Gastrocnemius medialis (tissue), 4 donors: ENCODE measurements at regions of chr9 and their contacts with region 1.

Region 1: DNA sequence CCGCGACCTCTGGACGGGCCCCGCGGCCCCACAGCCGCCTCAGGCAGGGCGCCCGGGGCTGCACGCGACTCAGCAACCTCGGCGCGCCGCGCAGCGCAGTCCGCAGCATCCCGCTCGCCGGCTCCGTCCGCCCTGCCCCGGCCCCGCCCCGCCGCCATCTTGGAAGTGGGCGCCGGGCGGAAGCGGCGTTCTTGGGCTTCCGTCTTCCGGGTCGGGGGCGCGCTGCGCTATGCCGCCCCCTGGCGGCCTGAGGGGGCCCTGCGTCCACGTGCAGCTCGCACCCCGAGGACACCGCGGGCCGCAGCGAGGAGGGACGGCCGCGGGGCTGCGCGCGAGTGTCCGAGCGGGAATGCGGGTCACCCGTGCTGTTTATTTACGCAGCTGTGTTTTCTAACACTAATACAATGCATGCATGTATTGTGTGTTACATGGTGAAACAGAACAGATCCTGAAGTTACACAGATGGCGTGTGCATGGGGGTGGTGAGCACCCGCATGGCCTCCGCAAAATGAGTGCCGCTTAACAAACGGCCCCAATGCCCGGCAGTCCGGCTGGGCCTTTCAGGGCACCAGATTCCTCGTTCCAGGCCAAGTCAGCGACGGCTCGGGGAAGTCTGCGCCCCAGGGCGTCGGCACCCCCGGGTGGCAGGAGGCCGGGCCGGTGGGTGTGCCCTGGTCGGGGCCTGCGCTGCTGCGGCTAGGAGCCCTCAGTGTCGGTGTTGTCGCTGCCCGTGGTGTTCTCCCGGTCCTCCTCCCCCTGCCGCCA is at the start of gene DNLZ:
- DNase-seq: peak; percentile 65 to 72
- ATAC-seq: peak; percentile 88
- H3K4me3 ChIP-seq: peak within 1 kb of the TSS; percentile 68 to 86 (median 78)
- H3K27ac ChIP-seq: peak within 1 kb of the TSS; percentile 81 to 96 (median 94)
- H3K4me1 ChIP-seq: peaks cover 7 to 9% of the 10 kb centered on the region in 2 donors
- H3K27me3 ChIP-seq: no peaks in the 10 kb centered on the region
- CTCF ChIP-seq: peak; percentile 88 to 100 (median 99)
- POLR2A ChIP-seq: peak; percentile 62 to 75
- total RNA-seq, gene DNLZ: 37.9 to 65.1 (median 54.3) TPM

Region 2: GRCh38 chr9:136245219-136246150 is 118.3 kb before region 1 on chr9 and contains the start of gene QSOX2:
- in situ Hi-C with region 1: no loop called
- intact Hi-C with region 1: loop called (anchors 1 kb)
- DNase-seq: peak; percentile 73 to 77
- ATAC-seq: peak; percentile 90 to 91
- H3K4me3 ChIP-seq: peak within 1 kb of the TSS; percentile 67 to 99 (median 83)
- H3K27ac ChIP-seq: peak within 1 kb of the TSS; percentile 49 to 61 (median 58)
- H3K4me1 ChIP-seq: peaks cover 14 to 19% of the 10 kb centered on the region in 2 donors
- H3K27me3 ChIP-seq: no peaks in the 10 kb centered on the region
- CTCF ChIP-seq: no peak
- POLR2A ChIP-seq: no peak
- total RNA-seq, gene QSOX2: 3.3 to 5.8 (median 5.2) TPM

Region 3: DNA sequence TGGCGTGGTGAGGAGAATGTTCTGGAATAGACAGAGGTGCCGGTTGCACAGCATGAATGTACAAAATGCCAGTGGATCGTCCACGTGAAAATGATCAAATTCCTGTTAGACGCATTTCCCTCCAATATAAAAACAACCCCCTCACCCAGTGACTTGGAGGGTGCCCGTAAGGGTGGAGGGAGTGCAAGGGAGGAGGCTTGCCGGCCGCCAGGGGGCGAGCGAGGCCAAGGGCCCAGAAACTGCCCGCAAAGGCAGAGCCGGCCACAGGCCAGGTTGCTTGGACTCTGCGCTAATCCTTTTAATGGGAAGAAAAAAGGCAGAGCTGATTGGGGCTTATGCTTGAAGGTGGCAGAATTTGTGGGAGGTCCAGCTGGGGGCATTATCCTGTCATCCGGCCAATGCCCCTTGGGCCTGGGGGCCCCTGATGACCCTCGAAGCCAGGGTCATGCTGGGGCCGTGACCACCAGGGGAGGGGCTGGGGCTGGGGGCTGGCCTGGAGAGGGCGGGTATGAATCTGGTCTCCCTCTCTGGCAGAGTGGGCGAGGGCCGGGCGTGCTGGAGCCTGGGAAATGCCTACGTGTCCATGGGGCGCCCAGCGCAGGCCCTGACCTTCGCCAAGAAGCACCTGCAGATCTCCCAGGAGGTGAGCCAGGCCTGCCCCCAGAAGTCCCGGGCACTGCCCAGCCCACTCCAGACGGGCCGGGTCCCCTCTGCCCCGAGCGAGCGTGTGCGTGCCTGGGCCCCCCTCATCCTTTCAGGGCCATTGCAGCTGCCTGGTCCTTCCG is 24.4 kb before region 1 on chr9:
- in situ Hi-C with region 1: no loop called
- intact Hi-C with region 1: loop called (anchors 1 kb)
- DNase-seq: peak in 1 of 2 donors; percentile 37
- ATAC-seq: peak; percentile 66 to 80
- H3K4me3 ChIP-seq: no peak overlapping the region
- H3K27ac ChIP-seq: no peak overlapping the region
- H3K4me1 ChIP-seq: peaks cover 0 to 5% of the 10 kb centered on the region in 2 donors
- H3K27me3 ChIP-seq: peaks cover 2 to 20% (median 13%) of the 10 kb centered on the region in 3 donors
- CTCF ChIP-seq: peak; percentile 43 to 89 (median 77)
- POLR2A ChIP-seq: no peak

Region 4: DNA sequence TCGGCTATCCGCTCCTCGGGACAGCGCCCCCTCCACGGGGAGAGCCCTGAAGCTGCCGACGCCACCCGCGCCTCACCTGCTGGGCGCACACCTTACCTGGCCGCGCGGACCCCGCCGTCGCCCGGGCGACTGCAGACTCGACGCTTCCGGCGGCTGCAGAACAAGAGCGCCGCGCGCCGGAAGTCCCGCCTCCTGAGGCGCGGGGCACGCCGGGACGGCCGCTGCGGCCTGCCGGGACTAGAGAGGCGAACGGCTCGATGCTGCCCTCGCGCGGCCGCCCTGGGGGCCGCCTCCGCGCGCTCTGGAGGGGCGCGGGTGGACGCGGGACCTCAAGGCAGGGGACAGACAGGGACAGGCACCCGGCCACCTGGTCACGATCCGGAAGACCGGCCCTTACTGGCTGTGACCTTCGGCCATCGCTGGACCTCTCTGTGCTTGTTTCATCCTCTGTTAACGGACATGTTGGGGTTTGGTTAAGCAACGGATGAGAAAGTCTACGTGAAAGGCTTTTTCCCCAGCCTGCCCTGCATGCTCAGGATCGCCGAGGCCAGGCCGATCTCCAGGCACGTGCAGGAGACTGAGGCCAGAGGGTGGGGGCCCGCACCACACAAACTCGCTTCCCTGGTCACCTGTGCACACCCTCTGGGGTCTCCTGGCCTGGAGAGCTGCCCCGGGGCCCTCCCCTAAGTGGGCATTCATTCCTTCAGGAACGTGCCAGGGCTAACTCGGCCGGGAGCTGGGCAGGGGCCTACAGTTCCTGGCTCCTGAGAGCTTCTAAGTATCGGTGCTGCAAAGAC is 36.4 kb after region 1 on chr9 and contains the start of gene SNAPC4:
- in situ Hi-C with region 1: no loop called
- intact Hi-C with region 1: loop called (anchors 1 kb)
- DNase-seq: peak; percentile 52 to 75
- ATAC-seq: peak; percentile 90 to 93
- H3K4me3 ChIP-seq: peak within 1 kb of the TSS; percentile 75 to 96 (median 94)
- H3K27ac ChIP-seq: peak within 1 kb of the TSS; percentile 54 to 78 (median 73)
- H3K4me1 ChIP-seq: peaks cover 14 to 18% of the 10 kb centered on the region in 2 donors
- H3K27me3 ChIP-seq: no peaks in the 10 kb centered on the region
- CTCF ChIP-seq: peak; percentile 84 to 98 (median 91)
- POLR2A ChIP-seq: peak; percentile 60 to 64
- total RNA-seq, gene SNAPC4: 2.3 to 6.0 (median 3.9) TPM

Region 5: DNA sequence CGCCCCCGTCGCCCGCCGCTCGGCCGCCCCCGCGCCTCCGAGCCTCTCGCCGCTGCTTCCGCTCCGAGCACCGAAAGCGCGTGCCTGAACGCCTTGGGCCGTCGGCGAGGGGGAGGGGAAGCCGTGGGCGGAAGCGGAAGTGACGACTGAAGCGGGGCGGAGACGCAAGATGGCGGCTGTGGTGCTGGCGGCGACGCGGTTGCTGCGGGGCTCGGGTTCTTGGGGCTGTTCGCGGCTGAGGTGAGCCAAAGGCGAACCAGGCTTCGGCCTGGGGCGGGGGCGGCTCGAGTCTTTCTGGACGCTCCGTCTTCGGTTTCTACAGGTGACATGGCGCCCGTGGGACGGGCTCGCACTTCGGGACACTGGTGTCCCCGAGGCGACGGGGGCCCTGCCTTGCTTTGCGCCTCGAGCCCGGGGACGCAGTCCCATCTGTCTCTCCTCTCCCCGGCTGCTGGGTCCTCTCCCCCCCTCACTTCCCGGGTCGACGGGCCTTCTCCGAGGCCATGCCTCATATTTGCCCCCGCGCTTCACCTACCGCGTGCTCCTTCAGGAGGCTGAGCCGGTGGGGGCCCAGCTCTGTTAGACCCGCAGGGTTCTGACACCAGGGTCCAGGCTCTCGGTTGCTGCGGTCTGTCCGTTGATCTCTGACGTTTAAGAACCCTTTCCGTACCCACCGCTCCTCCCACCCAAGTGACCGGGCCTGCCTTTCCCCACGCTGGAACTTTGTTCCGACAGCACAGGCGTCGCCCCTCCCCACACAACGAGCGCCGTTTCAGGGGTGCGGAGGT is 46.9 kb after region 1 on chr9 and contains the starts of genes ENTR1 and PMPCA:
- in situ Hi-C with region 1: no loop called
- intact Hi-C with region 1: no loop called
- DNase-seq: peak; percentile 87
- ATAC-seq: peak; percentile 94 to 96
- H3K4me3 ChIP-seq: peak within 1 kb of the TSS; percentile 76 to 97 (median 82)
- H3K27ac ChIP-seq: peak within 1 kb of the TSS; percentile 81 to 93 (median 90)
- H3K4me1 ChIP-seq: peaks cover 16 to 25% of the 10 kb centered on the region in 2 donors
- H3K27me3 ChIP-seq: no peaks in the 10 kb centered on the region
- CTCF ChIP-seq: no peak
- POLR2A ChIP-seq: peak; percentile 83 to 94
- total RNA-seq, gene ENTR1: 23.2 to 43.5 (median 36.5) TPM
- total RNA-seq, gene PMPCA: 35.9 to 63.1 (median 42.7) TPM

Region 6: DNA sequence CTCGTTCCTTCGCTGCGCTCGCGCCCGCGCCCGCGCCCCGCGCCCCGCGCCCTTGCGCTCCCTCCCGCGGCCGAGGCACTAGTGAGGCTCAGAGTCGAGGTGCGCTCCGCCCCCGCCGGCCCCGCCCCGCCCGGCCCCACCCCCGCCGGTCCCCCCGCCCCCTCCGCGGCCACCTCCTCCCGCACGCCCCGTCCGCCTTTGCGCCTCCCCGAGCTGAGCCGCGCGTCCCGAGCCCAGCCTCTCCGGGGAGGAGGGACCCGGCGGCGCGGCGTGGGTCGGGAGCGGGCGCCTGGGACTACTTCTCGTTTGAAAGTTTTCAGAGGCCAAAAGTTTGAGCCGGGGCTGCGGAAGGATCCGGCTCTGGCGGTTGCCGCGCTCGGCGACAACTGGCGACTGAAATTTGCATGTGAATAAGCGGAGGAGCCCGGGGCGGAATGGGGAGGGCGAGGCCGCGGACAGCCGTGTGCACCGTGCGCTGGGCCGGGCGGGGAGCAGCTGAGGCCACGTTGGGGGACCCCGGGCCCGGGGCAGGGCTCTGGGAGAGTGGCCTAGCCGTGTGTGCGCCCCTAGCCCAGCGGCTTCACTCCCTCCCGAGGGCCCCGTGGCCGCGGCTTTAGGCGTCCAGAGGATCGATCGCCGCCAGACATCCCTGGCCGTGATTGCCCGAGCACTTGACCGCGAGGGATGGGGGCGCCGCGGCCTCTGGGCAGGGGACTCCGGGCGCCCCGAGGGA is 182.3 kb after region 1 on chr9 and contains the start of gene NOTCH1:
- in situ Hi-C with region 1: no loop called
- intact Hi-C with region 1: loop called (anchors 2 kb)
- DNase-seq: peak; percentile 78 to 83
- ATAC-seq: peak; percentile 73 to 77
- H3K4me3 ChIP-seq: peak within 1 kb of the TSS; percentile 67 to 88 (median 76)
- H3K27ac ChIP-seq: peak within 1 kb of the TSS; percentile 91 to 96 (median 94)
- H3K4me1 ChIP-seq: peaks cover 17 to 20% of the 10 kb centered on the region in 2 donors
- H3K27me3 ChIP-seq: no peaks in the 10 kb centered on the region
- CTCF ChIP-seq: peak in 1 of 5 experiments; percentile 10
- POLR2A ChIP-seq: peak; percentile 81 to 86
- total RNA-seq, gene NOTCH1: 6.3 to 15.4 (median 8.2) TPM

Region 7: GRCh38 chr9:137689745-137690529 is 1326.1 kb after region 1 on chr9:
- in situ Hi-C with region 1: no loop called
- intact Hi-C with region 1: no loop called
- DNase-seq: no peak
- ATAC-seq: no peak
- H3K4me3 ChIP-seq: no peak overlapping the region
- H3K27ac ChIP-seq: no peak overlapping the region
- H3K4me1 ChIP-seq: peaks cover 26 to 30% of the 10 kb centered on the region in 2 donors
- H3K27me3 ChIP-seq: no peaks in the 10 kb centered on the region
- CTCF ChIP-seq: no peak
- POLR2A ChIP-seq: no peak